ENCODE measurements at regions of chr17 and their contacts with region 1.

Region 1: DNA sequence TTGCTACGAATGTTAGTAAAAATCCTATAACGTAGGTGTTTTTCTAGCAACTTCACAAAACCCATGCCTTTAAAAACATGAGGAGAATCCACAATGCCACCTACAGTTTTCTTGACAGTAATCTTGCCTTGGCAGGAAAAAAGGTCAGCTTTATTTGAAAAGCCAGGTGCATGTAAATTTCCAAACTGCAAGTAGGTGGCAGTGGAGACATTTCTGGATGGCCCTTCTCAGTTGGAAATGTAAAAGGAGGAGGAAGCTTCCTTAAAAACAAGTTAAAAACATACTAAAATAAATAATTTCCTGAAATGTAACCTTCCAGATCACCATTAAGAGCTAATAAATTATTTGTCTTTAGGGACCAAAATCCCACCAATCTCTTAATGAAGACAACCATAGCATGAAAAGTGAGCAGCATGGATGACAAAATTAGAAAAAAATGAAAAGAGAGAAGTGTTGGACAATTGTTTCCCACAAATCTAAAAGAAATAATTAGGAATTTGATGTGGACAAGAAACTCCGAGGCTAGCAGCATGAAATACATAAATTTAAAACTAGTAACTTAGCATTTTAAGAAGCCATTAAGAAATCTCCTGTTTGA is 152.2 kb downstream of the SNX11 start:
- DNase-seq: no peak
- ATAC-seq: no peak
- H3K4me3 ChIP-seq: no peak overlapping the region
- H3K27ac ChIP-seq: no peak overlapping the region
- H3K4me1 ChIP-seq: no peaks in the 10 kb centered on the region
- H3K27me3 ChIP-seq: no peaks in the 10 kb centered on the region

Region 2: DNA sequence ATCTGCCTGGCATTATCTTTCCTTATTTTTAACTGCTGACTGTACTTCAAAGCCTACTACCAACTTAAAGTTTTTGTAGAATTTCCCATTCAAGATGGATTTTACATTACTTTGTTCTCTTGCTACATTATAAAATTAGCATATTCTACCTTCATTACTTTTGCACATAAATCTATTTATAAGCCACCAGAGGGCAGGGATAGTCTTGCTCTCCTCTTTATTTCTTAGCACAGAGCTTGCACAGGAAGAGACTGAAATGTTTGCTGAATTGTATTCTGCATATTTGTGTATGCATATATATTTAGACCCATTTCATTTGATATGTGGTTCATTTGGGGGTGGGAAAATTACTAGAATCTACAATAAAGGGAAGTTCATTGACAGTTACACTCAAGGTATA is 62.3 kb after region 1 on chr17:
- intact Hi-C with region 1: loop called in 1 of 4 experiments (anchors 10 kb)
- DNase-seq: no peak
- ATAC-seq: no peak
- H3K4me3 ChIP-seq: no peak overlapping the region
- H3K27ac ChIP-seq: no peak overlapping the region
- H3K4me1 ChIP-seq: no peaks in the 10 kb centered on the region
- H3K27me3 ChIP-seq: peaks cover 2% of the 10 kb centered on the region

Region 3: DNA sequence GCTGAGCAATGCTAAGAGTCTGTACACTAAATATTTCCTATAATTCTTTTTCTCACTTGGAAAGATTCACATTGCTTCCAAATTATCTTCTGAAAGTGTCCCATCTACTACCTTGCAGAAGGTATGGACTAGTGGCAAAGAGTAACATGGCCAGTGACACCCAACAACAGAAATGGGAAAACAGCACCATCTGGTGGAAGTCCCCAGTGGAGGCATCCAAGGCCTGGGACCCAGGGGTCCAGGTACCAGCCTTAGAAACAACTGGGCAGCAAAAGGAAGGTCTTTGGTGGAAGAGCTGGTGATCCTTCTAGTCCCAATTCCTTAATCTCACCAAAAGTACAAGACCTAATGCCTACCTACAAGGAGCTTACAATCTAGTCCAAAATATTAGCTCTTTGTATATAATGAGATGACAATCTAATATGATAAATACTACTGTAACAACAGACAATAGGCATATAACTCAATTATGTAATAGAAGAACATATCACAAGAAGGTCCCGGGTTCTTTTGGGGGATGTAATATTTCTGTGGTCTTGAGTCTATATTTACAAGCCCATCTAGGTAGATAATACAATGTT is 114.9 kb after region 1 on chr17:
- intact Hi-C with region 1: no loop called
- DNase-seq: no peak
- ATAC-seq: no peak
- H3K4me3 ChIP-seq: no peak overlapping the region
- H3K27ac ChIP-seq: no peak overlapping the region
- H3K4me1 ChIP-seq: no peaks in the 10 kb centered on the region
- H3K27me3 ChIP-seq: no peaks in the 10 kb centered on the region